Mammary epithelial cell (primary cell): ENCODE measurements at regions of chr6 and their contacts with region 1.

Region 1: DNA sequence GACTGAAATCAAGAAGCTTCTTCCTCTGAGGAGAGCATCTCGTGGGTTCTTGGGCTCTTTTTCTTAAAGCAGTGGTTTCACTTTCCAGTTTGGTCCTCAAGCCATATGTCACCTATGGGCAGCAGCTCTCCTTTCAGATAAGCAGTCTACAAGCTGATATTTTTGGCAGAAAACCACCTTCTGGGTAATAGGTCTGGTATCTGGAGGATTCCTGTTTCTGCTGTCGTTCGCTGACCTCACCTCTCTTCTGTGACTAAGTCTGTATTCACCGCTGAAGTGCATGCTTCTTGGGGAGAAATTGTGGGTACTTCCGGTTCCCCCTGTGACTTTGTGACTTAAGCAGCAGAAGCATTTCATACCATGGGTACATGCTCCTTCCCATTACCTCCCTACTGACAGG is 193.6 kb downstream of the EDN1 start:
- DNase-seq: peak; percentile 91
- H3K4me3 ChIP-seq: no peak overlapping the region
- H3K27ac ChIP-seq: peak overlapping the region; percentile 74
- H3K4me1 ChIP-seq: peaks cover 30% of the 10 kb centered on the region
- H3K27me3 ChIP-seq: no peaks in the 10 kb centered on the region
- CTCF ChIP-seq: no peak

Region 2: GRCh38 chr6:12313992-12314805 is 169.5 kb before region 1 on chr6:
- CTCF ChIA-PET with region 1: no interaction called
- dilution Hi-C with region 1: no loop called
- in situ Hi-C with region 1: loop called in 1 of 2 experiments (anchors 25 kb)
- intact Hi-C with region 1: no loop called
- DNase-seq: peak; percentile 90
- H3K4me3 ChIP-seq: no peak overlapping the region
- H3K27ac ChIP-seq: peak overlapping the region; percentile 83
- H3K4me1 ChIP-seq: peaks cover 23% of the 10 kb centered on the region
- H3K27me3 ChIP-seq: no peaks in the 10 kb centered on the region
- CTCF ChIP-seq: no peak

Region 3: DNA sequence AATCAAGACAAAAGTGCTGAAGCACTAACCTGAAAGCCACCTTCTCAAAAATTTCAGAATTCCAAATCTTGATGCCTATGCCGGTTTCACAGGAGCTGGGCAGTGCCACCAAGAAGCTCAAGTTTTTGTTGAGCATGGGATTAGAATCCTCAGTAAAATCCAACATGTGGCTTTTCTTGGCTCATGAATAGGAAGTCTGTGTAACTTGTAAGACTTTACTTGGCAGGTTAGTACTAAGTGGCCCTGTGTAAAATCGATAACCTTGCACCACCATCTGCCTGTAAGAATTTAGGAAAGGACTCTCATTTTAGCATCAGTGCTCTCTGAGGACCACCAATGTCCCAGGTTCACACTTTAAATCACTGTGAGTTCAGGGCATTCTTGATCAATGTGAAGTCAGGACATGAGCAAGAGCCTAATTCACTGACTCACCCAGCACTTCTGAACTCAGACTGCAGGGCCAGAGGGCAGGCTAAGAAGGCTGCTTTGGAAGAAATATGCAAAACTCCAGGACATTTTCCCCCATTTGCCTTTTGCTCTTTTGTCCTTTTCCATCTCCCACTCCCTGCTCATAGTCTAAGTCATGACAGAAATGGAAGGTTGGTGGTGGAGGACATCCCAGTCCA is 80.4 kb before region 1 on chr6:
- CTCF ChIA-PET with region 1: no interaction called
- dilution Hi-C with region 1: no loop called
- in situ Hi-C with region 1: no loop called
- intact Hi-C with region 1: loop called (anchors 5 kb)
- DNase-seq: peak; percentile 56
- H3K4me3 ChIP-seq: no peak overlapping the region
- H3K27ac ChIP-seq: no peak overlapping the region
- H3K4me1 ChIP-seq: peaks cover 17% of the 10 kb centered on the region
- H3K27me3 ChIP-seq: no peaks in the 10 kb centered on the region
- CTCF ChIP-seq: peak; percentile 4 to 5

Region 4: GRCh38 chr6:12420626-12421025 is 63.1 kb before region 1 on chr6:
- CTCF ChIA-PET with region 1: no interaction called
- dilution Hi-C with region 1: loop called (anchors 5 kb)
- in situ Hi-C with region 1: no loop called
- intact Hi-C with region 1: no loop called
- DNase-seq: peak; percentile 90
- H3K4me3 ChIP-seq: no peak overlapping the region
- H3K27ac ChIP-seq: peak overlapping the region; percentile 41
- H3K4me1 ChIP-seq: peaks cover 10% of the 10 kb centered on the region
- H3K27me3 ChIP-seq: no peaks in the 10 kb centered on the region
- CTCF ChIP-seq: no peak

Region 5: DNA sequence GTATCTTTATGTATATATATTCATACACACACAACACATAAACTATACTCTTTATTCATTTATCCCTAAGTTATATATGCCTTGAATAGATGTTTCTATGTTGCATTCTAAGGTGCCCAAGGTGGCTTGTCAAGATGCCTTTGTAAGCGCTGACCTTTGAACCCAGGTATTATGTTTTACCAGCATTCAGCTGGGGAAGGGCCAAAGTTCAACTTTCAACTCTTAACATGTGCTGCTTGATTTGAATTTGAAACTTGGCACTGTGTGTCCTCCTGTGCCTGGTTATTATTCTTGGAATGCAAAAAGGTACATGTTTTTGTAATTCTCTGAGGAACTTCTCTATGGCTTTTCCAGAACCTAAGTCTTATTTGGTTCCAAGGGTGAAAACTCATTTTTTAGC is 47.0 kb before region 1 on chr6:
- CTCF ChIA-PET with region 1: no interaction called
- dilution Hi-C with region 1: no loop called
- in situ Hi-C with region 1: no loop called
- intact Hi-C with region 1: no loop called
- DNase-seq: no peak
- H3K4me3 ChIP-seq: no peak overlapping the region
- H3K27ac ChIP-seq: no peak overlapping the region
- H3K4me1 ChIP-seq: peaks cover 5% of the 10 kb centered on the region
- H3K27me3 ChIP-seq: no peaks in the 10 kb centered on the region
- CTCF ChIP-seq: no peak

Region 6: DNA sequence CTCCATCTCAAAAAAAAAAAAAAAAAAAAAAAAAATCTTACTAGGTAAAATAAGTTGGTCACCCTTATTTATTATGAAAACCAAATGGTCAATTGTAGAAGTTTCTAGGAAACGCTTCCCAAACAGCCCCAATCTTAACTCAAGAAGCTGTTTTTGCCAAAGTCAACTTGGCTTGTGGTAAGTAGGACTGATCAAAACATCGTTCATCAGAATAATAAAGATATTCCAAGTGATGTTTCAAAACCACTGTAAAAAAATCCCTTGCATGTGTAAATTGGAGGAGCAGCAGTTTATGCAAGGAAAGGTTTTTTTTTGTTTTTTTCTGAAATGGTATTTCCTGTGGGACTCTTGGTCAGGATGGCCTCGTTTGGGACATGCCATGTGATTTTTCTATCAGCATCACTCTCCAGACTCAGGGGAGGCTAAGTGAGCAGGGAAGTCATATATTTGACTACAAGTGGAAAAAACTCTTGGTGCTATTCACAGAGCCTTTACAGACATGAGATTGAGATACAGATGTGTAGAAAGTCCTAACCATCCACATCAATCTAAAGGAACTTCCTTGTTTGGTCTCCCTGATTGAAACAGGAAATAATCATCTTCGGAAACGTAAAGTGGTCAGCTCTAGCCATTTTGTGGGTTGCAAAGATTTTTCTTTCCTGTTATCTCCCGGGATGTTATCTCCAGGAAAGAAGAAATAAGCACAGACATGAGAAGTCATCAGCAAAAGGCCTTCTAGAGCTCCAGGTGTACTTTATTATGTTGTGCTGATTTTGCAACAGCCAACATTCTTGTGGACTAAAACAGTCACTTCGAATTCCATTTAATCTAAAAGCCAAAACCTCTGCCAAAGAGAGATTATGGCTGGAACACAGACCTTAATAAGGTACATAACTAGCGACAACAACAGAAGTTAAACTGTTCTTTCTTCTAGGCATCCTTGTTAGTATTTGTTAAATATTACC is 15.7 kb before region 1 on chr6:
- CTCF ChIA-PET with region 1: no interaction called
- dilution Hi-C with region 1: no loop called
- in situ Hi-C with region 1: no loop called
- intact Hi-C with region 1: no loop called
- DNase-seq: peak; percentile 41
- H3K4me3 ChIP-seq: no peak overlapping the region
- H3K27ac ChIP-seq: no peak overlapping the region
- H3K4me1 ChIP-seq: peaks cover 20% of the 10 kb centered on the region
- H3K27me3 ChIP-seq: no peaks in the 10 kb centered on the region
- CTCF ChIP-seq: no peak

Region 7: GRCh38 chr6:12494659-12495058 is 10.9 kb after region 1 on chr6:
- CTCF ChIA-PET with region 1: no interaction called
- dilution Hi-C with region 1: no loop called
- in situ Hi-C with region 1: no loop called
- intact Hi-C with region 1: no loop called
- DNase-seq: no peak
- H3K4me3 ChIP-seq: no peak overlapping the region
- H3K27ac ChIP-seq: no peak overlapping the region
- H3K4me1 ChIP-seq: peaks cover 6% of the 10 kb centered on the region
- H3K27me3 ChIP-seq: no peaks in the 10 kb centered on the region
- CTCF ChIP-seq: no peak

Region 8: DNA sequence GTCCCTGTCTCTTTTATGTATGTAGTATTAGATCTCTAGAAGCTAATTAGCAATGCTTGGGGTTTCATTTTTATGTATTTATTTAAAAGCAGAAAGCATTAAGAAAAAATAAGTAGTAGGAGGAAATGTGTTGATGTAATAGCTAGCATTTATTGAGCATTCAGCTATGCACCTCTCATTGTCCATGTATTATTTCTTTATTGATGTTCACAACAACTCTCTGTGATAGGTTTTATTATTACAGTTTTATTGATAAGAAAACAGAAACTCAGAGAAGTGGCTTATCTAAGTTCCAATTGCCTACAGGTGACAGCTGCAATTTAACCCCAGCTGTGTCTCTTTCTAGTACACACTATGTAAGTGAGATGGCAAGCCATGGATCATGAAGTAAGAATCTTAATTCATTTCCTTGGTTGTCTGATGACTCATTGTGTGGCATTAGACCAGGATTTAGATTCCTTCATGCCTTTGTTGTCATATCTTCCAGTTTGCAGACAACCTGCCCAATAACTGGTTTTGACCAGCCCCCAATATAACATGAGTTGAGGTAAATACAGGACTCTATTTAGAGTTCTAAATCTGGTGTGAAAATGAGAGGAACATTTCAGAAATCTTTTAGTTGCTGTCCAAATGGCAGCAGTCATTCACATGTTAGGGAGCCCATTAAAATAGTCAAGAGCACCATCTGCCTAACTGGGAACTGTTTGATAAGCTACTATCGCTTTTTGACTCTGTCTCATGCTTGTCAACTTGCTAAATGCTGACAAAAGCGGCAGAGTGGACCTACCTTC is 62.1 kb after region 1 on chr6:
- CTCF ChIA-PET with region 1: no interaction called
- dilution Hi-C with region 1: no loop called
- in situ Hi-C with region 1: no loop called
- intact Hi-C with region 1: no loop called
- DNase-seq: peak; percentile 76
- H3K4me3 ChIP-seq: no peak overlapping the region
- H3K27ac ChIP-seq: no peak overlapping the region
- H3K4me1 ChIP-seq: peaks cover 9% of the 10 kb centered on the region
- H3K27me3 ChIP-seq: no peaks in the 10 kb centered on the region
- CTCF ChIP-seq: no peak